Gastrocnemius medialis (tissue), 4 donors: ENCODE measurements at regions of chr4 and their contacts with region 1.

Region 1: GRCh38 chr4:56655209-56655626 is 25.9 kb downstream of the HOPX start:
- DNase-seq: peak; percentile 40 to 63
- ATAC-seq: peak; percentile 68 to 78
- H3K4me3 ChIP-seq: peak overlapping the region; percentile 64 to 70 (median 70)
- H3K27ac ChIP-seq: peak overlapping the region; percentile 78 to 89 (median 88)
- H3K4me1 ChIP-seq: peaks cover 45 to 52% of the 10 kb centered on the region in 2 donors
- H3K27me3 ChIP-seq: no peaks in the 10 kb centered on the region
- CTCF ChIP-seq: peak in 1 of 5 experiments; percentile 6
- POLR2A ChIP-seq: peak; percentile 55 to 58

Region 2: GRCh38 chr4:56387023-56388001 is 267.9 kb before region 1 on chr4 and contains the start of gene AASDH:
- in situ Hi-C with region 1: no loop called
- intact Hi-C with region 1: loop called (anchors 5 kb)
- DNase-seq: peak; percentile 78 to 86
- ATAC-seq: peak; percentile 96 to 97
- H3K4me3 ChIP-seq: peak within 1 kb of the TSS; percentile 72 to 98 (median 78)
- H3K27ac ChIP-seq: peak within 1 kb of the TSS; percentile 90 to 98 (median 92)
- H3K4me1 ChIP-seq: peaks cover 20 to 26% of the 10 kb centered on the region in 2 donors
- H3K27me3 ChIP-seq: no peaks in the 10 kb centered on the region
- CTCF ChIP-seq: peak in 1 of 5 experiments; percentile 32
- POLR2A ChIP-seq: peak; percentile 50 to 62
- total RNA-seq, gene AASDH: 2.6 to 4.2 (median 3.3) TPM

Region 3: GRCh38 chr4:56544573-56545131 is 110.6 kb before region 1 on chr4:
- in situ Hi-C with region 1: no loop called
- intact Hi-C with region 1: loop called (anchors 10 kb)
- DNase-seq: peak; percentile 52 to 56
- ATAC-seq: peak; percentile 96 to 97
- H3K4me3 ChIP-seq: peak overlapping the region; percentile 34 to 53 (median 48)
- H3K27ac ChIP-seq: no peak overlapping the region
- H3K4me1 ChIP-seq: peaks cover 0 to 4% of the 10 kb centered on the region in 2 donors
- H3K27me3 ChIP-seq: no peaks in the 10 kb centered on the region
- CTCF ChIP-seq: peak; percentile 82 to 98 (median 90)
- POLR2A ChIP-seq: no peak

Region 4: GRCh38 chr4:56799824-56800756 is 144.9 kb after region 1 on chr4:
- in situ Hi-C with region 1: no loop called
- intact Hi-C with region 1: loop called (anchors 10 kb)
- DNase-seq: peak; percentile 65 to 71
- ATAC-seq: peak; percentile 98 to 99
- H3K4me3 ChIP-seq: peak overlapping the region; percentile 53 to 78 (median 74)
- H3K27ac ChIP-seq: peak overlapping the region; percentile 22 to 67 (median 58)
- H3K4me1 ChIP-seq: peaks cover 0 to 8% of the 10 kb centered on the region in 2 donors
- H3K27me3 ChIP-seq: no peaks in the 10 kb centered on the region
- CTCF ChIP-seq: peak; percentile 45 to 84 (median 75)
- POLR2A ChIP-seq: no peak

Region 5: DNA sequence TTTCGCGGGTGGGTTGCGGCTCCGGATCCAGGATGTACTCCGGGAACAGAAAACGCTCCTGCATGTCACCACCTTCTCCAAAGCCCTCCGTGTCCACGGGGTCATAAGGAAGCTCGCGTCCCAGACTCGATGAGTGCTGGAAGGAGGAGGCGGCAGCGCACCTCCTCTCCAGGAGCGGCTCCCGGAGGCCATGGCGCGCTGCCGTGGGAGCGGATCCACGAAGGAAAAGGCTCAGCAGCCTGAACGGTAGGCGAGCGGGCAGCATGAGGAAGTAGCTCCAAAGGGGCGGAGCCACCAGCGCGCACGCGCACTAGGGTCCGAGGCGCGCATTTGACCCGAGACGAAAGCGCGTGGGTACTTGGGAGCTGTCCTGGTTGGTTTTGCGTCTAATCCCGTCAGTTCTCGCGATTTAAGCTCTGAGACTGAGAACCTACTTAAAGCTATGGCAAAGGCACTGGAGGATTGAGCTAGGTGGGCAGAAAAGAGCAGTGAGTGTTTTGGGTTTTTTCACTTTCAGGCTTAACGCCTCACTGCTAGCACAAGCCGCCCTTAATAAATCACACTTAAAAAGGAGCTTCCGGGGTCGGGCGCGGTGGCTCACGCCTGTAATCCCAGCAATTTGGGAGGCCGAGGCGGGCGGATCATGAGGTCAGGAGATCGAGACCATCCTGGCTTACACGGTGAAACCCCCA is 322.2 kb after region 1 on chr4 and contains the start of gene NOA1:
- in situ Hi-C with region 1: no loop called
- intact Hi-C with region 1: loop called (anchors 5 kb)
- DNase-seq: peak; percentile 96 to 98
- ATAC-seq: peak; percentile 87 to 93
- H3K4me3 ChIP-seq: peak within 1 kb of the TSS; percentile 81 to 95 (median 90)
- H3K27ac ChIP-seq: peak within 1 kb of the TSS; percentile 81 to 94 (median 91)
- H3K4me1 ChIP-seq: peaks cover 41 to 53% of the 10 kb centered on the region in 2 donors
- H3K27me3 ChIP-seq: no peaks in the 10 kb centered on the region
- CTCF ChIP-seq: peak in 1 of 5 experiments; percentile 1
- POLR2A ChIP-seq: peak; percentile 67 to 73
- total RNA-seq, gene NOA1: 20.3 to 34.5 (median 23.2) TPM